Activated B cell treated with CpG ODN at 0.5 μM for 24 hours (primary cell): ENCODE measurements at regions of chr19 and their contacts with region 1.

Region 1: DNA sequence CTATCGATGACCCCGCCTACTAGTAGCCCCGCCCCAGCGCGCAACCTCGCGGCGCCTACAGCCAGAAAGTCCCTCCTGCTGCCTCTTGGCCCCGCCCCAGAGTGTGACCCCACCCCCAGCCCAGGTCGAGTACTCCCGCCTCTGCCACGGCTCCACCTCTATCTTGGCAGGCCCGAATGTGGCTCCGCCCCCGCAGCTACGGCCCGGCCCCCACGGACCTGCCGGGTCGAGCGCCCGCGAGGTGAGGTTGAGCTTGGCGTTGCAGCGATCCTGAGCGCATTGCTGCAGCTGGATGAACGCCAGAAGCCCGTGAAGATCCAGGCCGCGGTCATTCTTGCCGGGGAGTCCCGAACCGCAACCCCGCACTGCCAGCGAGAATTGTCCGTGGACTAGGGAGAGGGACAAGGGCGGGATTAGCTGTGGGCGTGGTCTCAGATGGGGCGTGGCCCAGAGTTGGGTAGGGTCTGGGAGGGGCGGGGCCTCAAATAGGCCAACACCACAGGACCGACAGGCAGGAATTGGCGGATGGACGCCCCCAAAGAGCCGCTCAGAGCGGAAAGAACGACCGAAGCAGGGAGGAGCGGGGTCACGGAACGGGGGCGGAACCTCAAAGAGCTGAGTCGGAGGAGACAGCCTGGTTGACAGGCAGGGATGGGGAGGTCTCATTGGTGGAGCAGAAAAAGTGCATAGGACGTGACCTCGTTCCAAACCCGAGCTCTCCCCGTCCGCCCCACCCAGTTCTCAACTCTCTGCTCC is 1.8 kb downstream of the LYPD3 start:
- DNase-seq: peak; percentile 95
- ATAC-seq: peak; percentile 94
- H3K4me3 Mint-ChIP-seq: peak overlapping the region; percentile 92
- H3K27ac Mint-ChIP-seq: peak overlapping the region; percentile 88
- H3K4me1 Mint-ChIP-seq: peaks cover 17% of the 10 kb centered on the region
- H3K27me3 Mint-ChIP-seq: peaks cover 10% of the 10 kb centered on the region
- CTCF ChIP-seq: no peak

Region 2: DNA sequence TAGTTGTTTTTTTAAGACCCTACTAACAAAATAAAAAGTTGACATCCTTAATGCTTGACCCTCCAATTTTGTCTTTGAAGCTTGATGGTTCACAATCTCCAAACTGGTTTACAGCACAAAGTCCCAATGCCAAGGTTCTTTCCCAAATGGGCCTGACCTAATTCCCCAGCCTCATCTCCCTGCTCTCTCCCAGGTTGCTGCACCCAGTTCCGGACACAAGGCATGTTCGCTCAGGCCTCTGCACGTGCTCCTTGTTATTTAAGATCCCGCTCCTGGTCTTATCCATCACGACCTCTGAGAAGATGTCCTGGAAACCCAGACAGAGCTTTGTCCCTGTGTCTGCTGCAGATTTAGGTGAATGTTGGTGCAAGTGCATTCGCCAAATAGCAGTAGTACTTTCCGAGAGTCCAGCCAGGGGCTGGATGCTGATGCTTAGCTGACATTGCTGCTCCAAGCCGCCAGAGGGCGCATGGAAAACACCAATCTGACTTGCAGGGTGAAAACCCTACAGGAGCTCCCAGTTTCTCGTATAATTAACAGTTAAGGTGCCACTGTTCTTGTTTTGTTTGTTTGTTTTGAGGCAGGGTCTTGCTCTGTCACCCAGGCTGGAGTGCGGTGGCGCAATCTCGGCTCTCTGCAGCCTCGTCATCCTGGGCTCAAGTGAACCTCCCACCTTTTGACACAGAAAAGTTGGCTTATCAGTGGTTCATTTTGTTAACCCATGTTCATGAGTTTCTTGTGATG is 16.6 kb before region 1 on chr19:
- CTCF ChIA-PET with region 1: interaction called, 21 read pairs
- POLR2A ChIA-PET with region 1: no interaction called
- intact Hi-C with region 1: no loop called
- DNase-seq: peak; percentile 67
- ATAC-seq: peak; percentile 90
- H3K4me3 Mint-ChIP-seq: no peak overlapping the region
- H3K27ac Mint-ChIP-seq: no peak overlapping the region
- H3K4me1 Mint-ChIP-seq: peaks cover 6% of the 10 kb centered on the region
- H3K27me3 Mint-ChIP-seq: no peaks in the 10 kb centered on the region
- CTCF ChIP-seq: peak; percentile 47

Region 3: GRCh38 chr19:43503501-43504425 is 40.2 kb after region 1 on chr19:
- CTCF ChIA-PET with region 1: interaction called, 3 read pairs
- POLR2A ChIA-PET with region 1: interaction called, 49 read pairs
- intact Hi-C with region 1: loop called (anchors 1 kb)
- DNase-seq: peak; percentile 97
- ATAC-seq: peak; percentile 95
- H3K4me3 Mint-ChIP-seq: peak overlapping the region; percentile 96
- H3K27ac Mint-ChIP-seq: peak overlapping the region; percentile 96
- H3K4me1 Mint-ChIP-seq: peaks cover 19% of the 10 kb centered on the region
- H3K27me3 Mint-ChIP-seq: no peaks in the 10 kb centered on the region
- CTCF ChIP-seq: no peak

Region 4: DNA sequence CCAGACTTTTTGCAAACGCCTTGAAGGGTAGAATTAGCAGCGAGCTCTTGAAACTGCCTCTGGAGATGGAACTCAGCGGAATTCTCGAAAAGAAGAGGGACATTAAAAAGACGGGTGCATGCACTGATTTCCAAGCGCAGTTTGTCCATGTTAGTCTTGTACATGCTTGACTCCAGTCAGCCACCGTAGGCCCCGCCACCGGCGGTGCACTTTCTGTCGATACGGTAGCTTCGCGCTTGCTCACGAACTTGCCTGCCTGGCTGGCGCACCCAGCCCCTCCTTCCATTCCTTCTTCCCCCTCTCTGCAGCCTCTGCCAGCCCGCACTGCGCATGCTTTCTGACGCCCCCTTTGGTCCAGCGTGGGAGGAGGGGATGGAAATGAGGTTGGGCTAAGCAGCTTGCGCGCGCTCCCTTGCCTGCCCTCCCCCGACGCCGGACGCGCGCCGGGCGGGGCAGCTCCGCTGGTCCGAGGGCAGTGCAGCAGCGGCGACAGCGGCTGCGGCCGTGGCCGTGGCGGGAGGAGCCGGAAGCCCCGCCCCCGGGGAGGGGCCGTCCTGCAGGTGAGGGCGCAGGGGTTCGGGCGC is 69.5 kb after region 1 on chr19 and contains the start of gene ZNF575:
- CTCF ChIA-PET with region 1: interaction called, 4 read pairs
- POLR2A ChIA-PET with region 1: interaction called, 12 read pairs
- intact Hi-C with region 1: loop called (anchors 1 kb)
- DNase-seq: peak; percentile 77
- ATAC-seq: peak; percentile 45
- H3K4me3 Mint-ChIP-seq: peak within 1 kb of the TSS; percentile 97
- H3K27ac Mint-ChIP-seq: peak within 1 kb of the TSS; percentile 98
- H3K4me1 Mint-ChIP-seq: peaks cover 19% of the 10 kb centered on the region
- H3K27me3 Mint-ChIP-seq: no peaks in the 10 kb centered on the region
- CTCF ChIP-seq: no peak
- total RNA-seq, gene ZNF575: 1.9 and 3.4 TPM in 2 replicates

Region 5: GRCh38 chr19:43575156-43575950 is 111.8 kb after region 1 on chr19 and contains the starts of genes PINLYP and XRCC1:
- CTCF ChIA-PET with region 1: no interaction called
- POLR2A ChIA-PET with region 1: no interaction called
- intact Hi-C with region 1: loop called (anchors 1 kb)
- DNase-seq: peak; percentile 87
- ATAC-seq: peak; percentile 97
- H3K4me3 Mint-ChIP-seq: peak within 1 kb of the TSS; percentile 96
- H3K27ac Mint-ChIP-seq: peak within 1 kb of the TSS; percentile 92
- H3K4me1 Mint-ChIP-seq: peaks cover 44% of the 10 kb centered on the region
- H3K27me3 Mint-ChIP-seq: no peaks in the 10 kb centered on the region
- CTCF ChIP-seq: no peak
- total RNA-seq, gene PINLYP: 1.9 and 2.1 TPM in 2 replicates
- total RNA-seq, gene XRCC1: 31.9 and 34.5 TPM in 2 replicates

Region 6: DNA sequence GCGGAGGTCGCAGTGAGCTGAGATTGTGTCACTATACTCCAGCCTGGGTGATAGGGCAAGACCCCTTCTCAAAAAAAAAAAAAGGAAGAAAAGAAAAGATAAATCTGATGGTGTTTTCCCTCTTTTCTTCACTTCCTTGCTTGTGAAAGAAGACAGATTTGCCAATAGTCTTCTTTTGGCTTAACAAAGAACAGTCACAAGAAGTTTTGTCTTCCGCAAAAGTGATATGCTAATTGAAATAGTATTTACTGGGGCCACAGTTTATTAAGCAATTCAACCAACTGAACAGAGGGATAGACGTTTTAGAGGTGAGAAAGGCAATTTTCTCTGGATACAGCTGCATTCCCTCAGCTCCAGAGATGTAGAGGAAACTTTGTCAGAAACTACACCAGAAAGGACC is 229.3 kb after region 1 on chr19:
- CTCF ChIA-PET with region 1: no interaction called
- POLR2A ChIA-PET with region 1: no interaction called
- intact Hi-C with region 1: no loop called
- DNase-seq: no peak
- ATAC-seq: no peak
- H3K4me3 Mint-ChIP-seq: no peak overlapping the region
- H3K27ac Mint-ChIP-seq: no peak overlapping the region
- H3K4me1 Mint-ChIP-seq: no peaks in the 10 kb centered on the region
- H3K27me3 Mint-ChIP-seq: peaks cover 6% of the 10 kb centered on the region
- CTCF ChIP-seq: no peak

Region 7: GRCh38 chr19:43957891-43958290 is 494.3 kb after region 1 on chr19:
- CTCF ChIA-PET with region 1: no interaction called
- POLR2A ChIA-PET with region 1: no interaction called
- intact Hi-C with region 1: no loop called
- DNase-seq: no peak
- ATAC-seq: no peak
- H3K4me3 Mint-ChIP-seq: no peak overlapping the region
- H3K27ac Mint-ChIP-seq: no peak overlapping the region
- H3K4me1 Mint-ChIP-seq: no peaks in the 10 kb centered on the region
- H3K27me3 Mint-ChIP-seq: no peaks in the 10 kb centered on the region
- CTCF ChIP-seq: no peak